Dendritic cell treated with granulocyte-macrophage colony-stimulating factor and Interleukin-4, amounts not matched to agents 40 ng/mL and 50 ng/mL, for 4 days (primary cell): ENCODE measurements at regions of chr14 and their contacts with region 1.

Region 1: DNA sequence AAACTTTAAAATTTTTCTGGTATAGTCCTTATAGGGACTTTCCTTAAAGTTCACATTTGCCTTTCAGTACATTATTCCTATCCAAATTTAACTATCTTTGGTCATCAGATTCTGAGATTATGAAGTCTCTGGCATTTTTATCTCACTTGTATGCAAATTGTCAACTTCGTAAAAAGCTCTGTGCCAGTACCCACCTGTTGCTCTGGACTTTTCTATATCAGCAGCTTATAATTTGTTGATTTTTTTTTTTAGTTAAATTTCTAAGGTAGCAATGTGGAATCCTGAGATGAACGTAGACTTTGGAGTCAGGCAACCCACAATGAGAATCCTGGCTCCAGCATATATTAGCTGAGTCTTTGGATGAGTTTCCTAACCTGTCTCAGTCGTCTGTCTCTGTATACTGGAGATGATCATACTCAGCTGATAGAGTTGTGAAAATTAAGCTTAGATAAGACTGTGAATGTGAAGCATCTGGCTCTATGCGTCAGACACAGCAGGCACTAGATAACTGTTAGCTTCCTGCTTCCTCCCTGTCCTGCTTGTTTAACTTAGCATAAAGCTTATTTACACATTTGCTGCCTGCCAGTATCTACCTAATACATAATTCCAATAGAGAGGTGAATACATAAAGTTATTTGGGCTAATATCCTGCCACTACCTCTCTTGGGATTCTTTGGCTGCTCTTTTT is 59.8 kb downstream of the MARK3 start:
- H3K4me3 Mint-ChIP-seq: no peak overlapping the region
- H3K27ac Mint-ChIP-seq: no peak overlapping the region
- H3K4me1 Mint-ChIP-seq: peaks cover 54% of the 10 kb centered on the region
- H3K27me3 Mint-ChIP-seq: no peaks in the 10 kb centered on the region

Region 2: DNA sequence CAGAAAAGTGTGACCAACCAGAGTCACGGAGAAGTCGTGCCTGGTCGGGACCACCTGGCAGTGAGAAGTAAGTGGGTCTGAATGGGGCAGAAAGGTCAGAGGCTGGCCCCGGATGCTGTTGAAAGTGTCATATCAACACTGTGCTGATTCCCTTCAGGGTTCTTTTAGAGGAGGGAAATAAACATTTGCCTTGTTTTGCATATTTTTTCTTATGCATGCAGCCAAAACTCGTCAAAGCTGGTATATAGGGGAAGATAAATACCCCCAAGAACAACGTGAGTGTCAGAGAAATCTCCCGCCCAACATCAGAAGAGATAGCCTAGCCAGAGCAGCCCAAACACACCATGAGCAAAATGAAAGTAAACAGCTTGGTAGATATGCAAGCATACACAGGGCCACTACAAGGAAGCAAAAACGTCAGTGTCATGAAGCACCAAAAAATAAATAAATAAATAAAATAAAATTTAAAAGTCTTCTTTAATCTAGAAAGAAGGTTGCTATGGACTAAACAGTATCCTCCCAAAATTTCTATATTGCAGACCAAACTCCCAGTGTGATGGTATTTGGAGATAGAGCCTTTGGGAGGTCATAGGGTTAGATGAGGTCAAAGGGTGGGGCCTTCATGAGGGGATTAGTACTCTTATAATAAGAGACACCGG is 88.8 kb before region 1 on chr14:
- intact Hi-C with region 1: no loop called
- H3K4me3 Mint-ChIP-seq: no peak overlapping the region
- H3K27ac Mint-ChIP-seq: no peak overlapping the region
- H3K4me1 Mint-ChIP-seq: peaks cover 15% of the 10 kb centered on the region
- H3K27me3 Mint-ChIP-seq: peaks cover 7% of the 10 kb centered on the region

Region 3: DNA sequence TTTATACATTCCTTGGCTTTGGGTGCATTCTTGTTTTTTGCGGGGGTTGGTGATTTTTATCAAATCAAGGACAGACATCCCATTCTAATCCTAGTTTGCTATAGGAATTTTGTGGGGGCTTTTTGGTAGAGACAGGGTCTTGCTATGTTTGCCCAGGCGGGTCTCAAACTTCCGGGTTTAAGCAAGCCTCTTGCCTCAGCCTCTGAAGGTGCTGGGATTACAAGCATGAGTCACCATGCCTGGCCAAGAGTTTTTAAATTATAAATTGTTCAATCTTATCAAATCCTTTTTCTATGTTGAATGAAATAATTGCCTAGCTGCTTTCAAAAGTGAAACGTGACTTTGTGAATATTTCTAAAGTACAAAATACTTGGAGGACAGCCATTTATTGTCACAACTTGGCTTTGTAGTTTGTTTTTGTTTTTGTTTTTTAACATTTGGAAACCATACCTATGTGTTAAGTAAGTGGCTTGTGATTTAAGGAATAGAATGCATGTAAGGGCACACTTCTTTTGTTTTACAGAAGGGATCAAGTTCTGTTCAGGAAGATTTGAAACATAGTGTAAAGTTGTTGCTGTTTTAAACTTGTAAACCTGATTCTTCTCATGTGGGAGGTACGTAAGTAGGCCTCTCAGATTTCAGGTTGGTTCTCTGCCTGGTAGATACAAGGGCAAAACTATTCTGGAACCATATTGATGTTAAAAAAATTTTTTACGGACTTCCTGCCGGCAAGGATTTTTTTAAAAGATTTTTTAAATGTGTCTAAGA is 46.4 kb before region 1 on chr14:
- intact Hi-C with region 1: loop called (anchors 5 kb)
- H3K4me3 Mint-ChIP-seq: no peak overlapping the region
- H3K27ac Mint-ChIP-seq: no peak overlapping the region
- H3K4me1 Mint-ChIP-seq: peaks cover 76% of the 10 kb centered on the region
- H3K27me3 Mint-ChIP-seq: no peaks in the 10 kb centered on the region

Region 4: DNA sequence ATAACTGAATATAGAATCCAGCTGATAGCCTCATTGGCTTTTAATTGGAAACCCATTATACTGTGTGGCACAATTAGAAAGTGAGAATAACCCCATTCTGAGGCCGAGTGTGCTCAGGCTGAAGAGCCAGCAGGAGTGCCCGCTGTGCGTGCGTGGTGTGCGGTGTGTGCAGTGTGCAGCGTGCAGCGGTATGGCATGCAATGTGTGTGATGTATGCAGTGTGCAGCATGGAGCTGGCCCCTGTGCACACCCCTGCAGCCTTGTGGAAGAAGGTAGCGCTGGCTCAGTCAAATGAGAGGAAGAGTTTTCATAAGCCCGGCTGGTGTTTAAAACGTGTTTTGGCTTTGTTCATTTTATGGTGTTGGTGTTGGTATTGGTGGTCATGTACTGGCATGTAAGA is 54.7 kb after region 1 on chr14:
- intact Hi-C with region 1: no loop called
- H3K4me3 Mint-ChIP-seq: no peak overlapping the region
- H3K27ac Mint-ChIP-seq: no peak overlapping the region
- H3K4me1 Mint-ChIP-seq: no peaks in the 10 kb centered on the region
- H3K27me3 Mint-ChIP-seq: no peaks in the 10 kb centered on the region